ENCODE measurements at regions of chr6 and their contacts with region 1.

Region 1: DNA sequence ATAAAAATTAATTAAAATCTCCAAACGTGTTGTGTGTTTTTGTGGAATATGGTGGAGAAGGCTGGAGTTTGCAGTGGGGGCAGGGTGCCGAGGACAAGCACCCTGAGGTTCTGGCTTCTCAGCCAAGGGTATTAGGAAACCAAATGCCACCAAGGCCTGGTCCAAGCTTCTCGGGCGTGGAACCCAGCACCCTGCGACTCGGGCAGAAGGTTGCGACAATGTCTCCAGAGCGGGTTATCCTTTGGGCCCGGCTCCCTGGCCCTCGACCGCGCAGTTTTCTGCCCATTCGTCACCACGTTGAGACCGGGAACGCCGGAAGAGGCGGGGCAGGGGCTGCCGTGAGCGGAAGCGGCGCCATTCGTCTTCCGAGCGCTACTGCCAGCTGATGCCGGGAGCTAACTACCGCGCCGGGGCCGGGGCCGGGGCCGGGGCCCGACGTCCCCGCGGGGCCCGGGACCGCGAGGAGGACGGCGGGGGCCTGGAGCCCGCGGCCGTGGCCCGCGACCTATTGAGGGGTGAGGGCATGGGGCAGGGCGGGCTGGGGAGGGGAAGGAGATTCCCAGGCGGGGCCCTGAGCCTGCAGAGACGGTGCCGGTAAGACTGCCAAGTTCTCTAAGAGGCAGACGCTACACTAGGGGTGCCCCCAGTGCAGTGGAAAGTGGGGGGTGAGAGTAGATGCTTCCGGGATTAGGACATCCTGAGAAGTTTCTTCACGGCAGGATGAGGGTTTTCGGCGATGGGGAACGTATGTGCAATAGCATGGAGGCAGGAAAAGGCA is at the start of gene RRP36:
- DNase-seq: peak; percentile 68
- H3K4me3 Mint-ChIP-seq: peak within 1 kb of the TSS; percentile 92
- H3K27ac Mint-ChIP-seq: peak within 1 kb of the TSS; percentile 57
- H3K4me1 Mint-ChIP-seq: peaks cover 9% of the 10 kb centered on the region
- H3K27me3 Mint-ChIP-seq: no peaks in the 10 kb centered on the region
- CTCF ChIP-seq: no peak
- total RNA-seq, gene RRP36: 72.8 and 80.4 TPM in 2 replicates

Region 2: GRCh38 chr6:42890311-42891198 is 130.9 kb before region 1 on chr6:
- CTCF ChIA-PET with region 1: no interaction called
- POLR2A ChIA-PET with region 1: interaction called, 10 read pairs
- intact Hi-C with region 1: no loop called
- DNase-seq: peak; percentile 98
- H3K4me3 Mint-ChIP-seq: peak overlapping the region; percentile 89
- H3K27ac Mint-ChIP-seq: peak overlapping the region; percentile 80
- H3K4me1 Mint-ChIP-seq: no peaks in the 10 kb centered on the region
- H3K27me3 Mint-ChIP-seq: no peaks in the 10 kb centered on the region
- CTCF ChIP-seq: no peak

Region 3: DNA sequence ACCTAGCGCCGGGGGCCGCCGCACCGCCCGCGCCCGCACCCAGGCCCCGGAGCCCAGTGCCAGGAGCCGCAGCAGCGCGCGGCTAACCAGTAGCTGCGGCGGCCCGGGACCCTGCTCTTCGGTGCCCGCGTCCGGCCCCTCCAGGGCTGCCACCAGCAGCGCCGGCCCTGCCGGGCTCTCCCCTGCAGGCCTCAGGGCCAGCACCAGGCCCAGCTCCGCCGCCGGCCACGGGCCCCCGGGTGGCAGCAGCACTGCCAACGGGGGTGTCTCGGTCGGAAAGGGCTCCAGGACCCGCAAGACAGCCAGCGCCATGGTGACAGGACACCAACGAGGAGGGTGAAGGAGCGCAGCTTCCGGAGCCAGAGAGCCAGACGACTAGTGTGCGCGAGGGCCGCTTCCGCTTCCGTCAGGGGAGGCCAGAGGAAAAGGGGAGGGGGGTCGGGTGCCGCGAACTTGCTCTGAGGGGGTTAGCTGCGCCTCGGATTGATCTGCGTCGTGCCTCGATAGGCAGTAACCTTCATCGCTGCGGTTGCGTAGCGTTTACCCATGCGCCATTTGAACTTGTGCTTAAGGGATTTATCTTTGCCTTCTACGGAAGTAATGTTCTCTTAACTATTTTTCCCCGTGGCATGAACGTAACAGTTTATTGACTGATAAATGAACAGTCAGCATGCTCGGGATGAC is 42.5 kb before region 1 on chr6 and contains the start of gene PEX6:
- CTCF ChIA-PET with region 1: no interaction called
- POLR2A ChIA-PET with region 1: interaction called, 18 read pairs
- intact Hi-C with region 1: no loop called
- DNase-seq: peak; percentile 91
- H3K4me3 Mint-ChIP-seq: peak within 1 kb of the TSS; percentile 87
- H3K27ac Mint-ChIP-seq: peak within 1 kb of the TSS; percentile 91
- H3K4me1 Mint-ChIP-seq: peaks cover 15% of the 10 kb centered on the region
- H3K27me3 Mint-ChIP-seq: no peaks in the 10 kb centered on the region
- CTCF ChIP-seq: no peak
- total RNA-seq, gene PEX6: 25.8 and 34.0 TPM in 2 replicates